GM13976 (cell line): ENCODE measurements at regions of chr10 and their contacts with region 1.

Region 1: GRCh38 chr10:103888113-103888841 is 29.7 kb downstream of the STN1 start:
- DNase-seq: peak; percentile 60
- CTCF ChIP-seq: peak; percentile 67

Region 2: DNA sequence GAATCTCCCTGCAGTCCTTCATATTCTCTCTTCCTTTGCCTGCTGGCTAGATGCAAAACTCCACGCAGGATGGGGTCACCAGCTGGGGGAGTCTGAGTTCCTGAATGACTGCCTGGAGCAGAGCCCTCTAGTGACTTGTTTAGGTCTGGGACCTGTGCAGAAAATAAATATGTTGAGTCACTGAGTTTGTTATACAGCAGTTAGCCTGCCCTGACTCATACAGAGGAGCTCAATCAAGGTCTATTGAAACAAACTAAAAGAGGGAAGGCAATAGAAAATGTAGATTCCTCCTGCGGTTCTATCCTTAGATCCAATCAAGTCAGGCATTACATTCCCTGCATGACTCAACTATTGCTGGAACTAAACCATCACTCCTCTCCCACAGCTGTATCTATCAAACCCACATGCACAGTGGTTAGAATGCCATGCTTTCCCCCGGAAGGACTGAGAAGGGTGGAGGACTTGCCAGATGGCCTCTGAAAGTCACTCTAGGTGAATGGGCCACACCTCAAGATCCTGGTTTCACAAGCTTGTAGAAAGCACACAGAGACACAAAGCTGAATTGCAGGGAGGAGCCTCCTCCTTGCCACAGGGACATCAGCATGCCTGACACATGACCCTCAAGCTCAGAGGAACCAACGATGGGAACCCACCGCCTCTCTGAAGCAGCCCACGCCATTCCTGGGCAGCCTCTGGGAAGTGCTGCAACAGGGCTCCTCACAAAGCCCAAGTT is 106.8 kb before region 1 on chr10:
- in situ Hi-C with region 1: no loop called
- DNase-seq: no peak
- CTCF ChIP-seq: no peak

Region 3: DNA sequence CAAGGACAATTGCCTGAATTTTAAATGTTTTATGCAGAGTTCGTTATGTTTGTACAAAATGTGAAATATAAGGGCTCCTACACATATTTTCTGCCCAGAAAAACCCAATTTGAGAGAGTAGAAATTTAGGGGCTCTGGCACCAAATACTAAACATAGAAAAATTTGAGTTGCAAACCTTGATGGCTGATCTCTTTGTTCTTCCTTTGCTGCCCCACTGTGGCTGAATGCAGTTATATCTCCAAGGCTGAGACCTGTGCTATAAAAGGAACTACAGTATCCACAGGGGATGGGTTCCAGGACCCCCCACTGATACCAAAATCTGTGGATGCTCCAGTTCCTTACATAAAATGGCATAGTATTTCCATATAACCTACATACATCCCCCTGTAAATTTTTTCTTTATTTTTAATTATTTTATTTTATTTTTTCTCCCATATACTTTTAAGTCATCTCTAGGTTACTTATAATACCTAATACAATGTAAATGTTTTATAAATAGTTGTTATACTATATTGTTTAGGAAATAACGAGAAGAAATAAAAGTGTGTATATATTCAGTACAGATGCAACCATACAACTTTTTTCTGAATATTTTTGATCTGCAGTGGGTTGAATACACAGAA is 321.4 kb after region 1 on chr10:
- in situ Hi-C with region 1: loop called (anchors 25 kb)
- DNase-seq: peak; percentile 47
- CTCF ChIP-seq: peak; percentile 32